ENCODE measurements at regions of chr11 and their contacts with region 1.

Region 1: DNA sequence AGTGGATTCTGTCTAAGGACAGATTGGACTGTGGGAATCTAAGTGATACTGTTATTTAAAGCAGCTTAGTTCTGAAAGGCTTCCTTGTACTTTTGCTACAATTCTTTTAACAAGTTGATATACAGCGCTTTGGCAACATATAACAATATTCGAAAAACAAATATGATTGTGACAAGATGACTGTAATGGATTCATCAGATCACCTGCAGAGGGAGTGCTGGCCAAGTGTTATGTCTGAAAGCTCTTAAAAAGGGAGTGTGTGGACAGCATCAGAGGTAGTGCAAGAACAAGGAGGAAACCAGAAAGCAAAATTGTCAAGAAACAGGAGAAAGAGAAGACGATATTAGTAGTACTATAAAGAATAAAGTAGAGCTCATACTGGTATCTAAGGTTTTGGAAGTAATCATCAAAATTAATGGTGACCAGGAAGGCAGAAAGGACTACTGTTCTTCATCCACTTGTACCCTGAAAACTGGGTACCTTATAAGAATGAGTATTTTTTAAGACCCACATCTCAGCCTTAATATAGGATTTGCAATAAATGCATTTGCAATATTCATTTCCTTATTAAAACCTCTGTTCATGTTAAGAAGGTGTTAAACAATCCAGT is 1112.0 kb upstream of the CCDC90B start:
- DNase-seq: peak; percentile 7
- ATAC-seq: peak; percentile 53
- H3K4me3 ChIP-seq: no peak overlapping the region
- H3K27ac ChIP-seq: no peak overlapping the region
- H3K4me1 ChIP-seq: no peaks in the 10 kb centered on the region
- H3K27me3 ChIP-seq: no peaks in the 10 kb centered on the region
- CTCF ChIP-seq: 0 out of 2 replicates have a peak, but pooled peaks have one; percentile 12
- EP300 ChIP-seq: no peak
- POLR2A ChIP-seq: no peak
- RAD21 ChIP-seq: no peak

Region 2: GRCh38 chr11:84524422-84525051 is 126.4 kb after region 1 on chr11:
- CTCF ChIA-PET with region 1: no interaction called
- POLR2A ChIA-PET with region 1: no interaction called
- in situ Hi-C with region 1: loop called (anchors 10 kb)
- intact Hi-C with region 1: loop called (anchors 5 kb)
- DNase-seq: no peak
- ATAC-seq: no peak
- H3K4me3 ChIP-seq: no peak overlapping the region
- H3K27ac ChIP-seq: no peak overlapping the region
- H3K4me1 ChIP-seq: no peaks in the 10 kb centered on the region
- H3K27me3 ChIP-seq: no peaks in the 10 kb centered on the region
- CTCF ChIP-seq: peak; percentile 26
- EP300 ChIP-seq: no peak
- POLR2A ChIP-seq: no peak
- RAD21 ChIP-seq: no peak

Measured in HepG2 (cell line).